Astrocyte of the cerebellum (primary cell): ENCODE measurements at regions of chr3 and their contacts with region 1.

Region 1: DNA sequence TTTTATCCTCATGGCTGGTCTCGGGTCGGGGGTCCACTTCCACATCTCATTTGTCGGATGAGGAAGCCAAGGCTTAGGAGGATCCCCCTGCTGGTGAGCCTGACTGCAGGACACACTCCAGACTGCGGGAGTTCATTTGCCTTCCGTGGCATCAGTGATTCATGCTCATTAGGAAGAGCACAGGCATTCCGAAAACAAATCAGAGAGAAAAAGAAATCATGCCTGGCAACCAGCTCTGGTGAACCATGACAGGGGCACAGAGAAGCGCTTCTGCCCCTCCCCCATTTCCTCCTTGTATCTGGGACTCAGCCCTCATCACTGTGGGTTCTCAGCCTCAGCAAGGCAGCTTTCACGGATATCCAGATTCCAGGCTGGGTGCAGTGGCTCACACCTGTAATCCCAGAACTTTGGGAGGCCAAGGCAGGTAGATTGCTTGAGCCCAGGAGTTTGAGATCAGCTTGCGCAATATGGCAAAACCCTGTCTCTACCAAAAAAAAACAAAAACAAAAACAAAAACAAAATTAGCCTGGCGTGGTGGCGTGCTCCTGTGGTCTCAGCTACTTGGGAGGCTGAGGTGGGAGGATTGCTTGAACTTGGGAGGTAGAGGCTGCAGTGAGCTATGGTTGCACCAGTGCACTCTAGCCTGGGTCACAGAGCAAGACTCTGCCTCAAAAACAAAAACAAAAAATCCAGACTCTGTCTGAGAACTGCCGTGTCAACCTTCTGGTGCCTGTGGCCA is 28.4 kb downstream of the IRAK2 start:
- DNase-seq: peak; percentile 78
- H3K4me3 ChIP-seq: no peak overlapping the region
- CTCF ChIP-seq: peak; percentile 78

Region 2: GRCh38 chr3:10248184-10249080 is 55.3 kb after region 1 on chr3 and contains the start of gene TATDN2:
- in situ Hi-C with region 1: no loop called
- DNase-seq: peak; percentile 87
- H3K4me3 ChIP-seq: peak within 1 kb of the TSS; percentile 57
- CTCF ChIP-seq: no peak

Region 3: GRCh38 chr3:10263646-10264363 is 70.7 kb after region 1 on chr3:
- in situ Hi-C with region 1: loop called (anchors 5 kb)
- DNase-seq: no peak
- H3K4me3 ChIP-seq: no peak overlapping the region
- CTCF ChIP-seq: peak; percentile 59